Astrocyte of the cerebellum (primary cell): ENCODE measurements at regions of chr2 and their contacts with region 1.

Region 1: DNA sequence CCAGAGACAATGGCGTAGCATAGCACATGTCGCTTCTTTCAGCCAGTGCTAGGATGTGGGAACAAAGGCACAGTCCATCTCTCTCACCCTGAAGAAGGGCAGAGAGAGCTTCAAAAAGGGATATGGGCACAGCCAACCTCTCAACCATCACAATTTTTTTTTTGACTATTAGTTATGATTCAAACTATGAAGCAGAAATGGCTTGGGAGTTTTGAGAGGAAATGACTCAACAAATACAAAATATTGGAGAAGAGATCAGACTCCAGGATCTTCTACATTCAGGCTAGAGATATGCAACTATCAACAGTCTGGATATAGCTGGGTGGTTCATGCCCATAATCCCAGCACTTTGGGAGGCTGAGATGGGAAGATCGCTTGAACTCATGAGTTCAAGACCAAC is 109.1 kb downstream of the MCFD2 start:
- DNase-seq: no peak
- H3K4me3 ChIP-seq: no peak overlapping the region
- CTCF ChIP-seq: no peak

Region 2: DNA sequence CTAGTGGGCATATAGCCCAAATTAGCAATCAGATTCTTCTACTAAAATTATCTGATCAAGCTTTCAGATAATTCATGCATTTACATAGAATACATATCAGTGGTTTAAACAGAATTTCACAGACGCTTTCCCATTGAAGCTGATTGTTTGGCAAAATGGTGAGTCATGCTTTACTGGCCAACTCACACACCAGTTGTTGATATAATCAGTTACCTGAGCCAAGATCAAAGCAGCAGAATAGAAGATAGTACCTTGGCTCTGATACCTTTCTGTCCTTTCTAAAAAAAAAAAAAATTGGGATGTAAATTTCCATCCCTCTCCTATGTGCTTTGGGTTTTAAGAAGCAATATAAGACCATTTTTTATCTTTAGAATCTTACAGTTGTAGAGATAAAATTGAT is 68.9 kb before region 1 on chr2:
- in situ Hi-C with region 1: loop called (anchors 5 kb)
- DNase-seq: no peak
- H3K4me3 ChIP-seq: no peak overlapping the region
- CTCF ChIP-seq: no peak

Region 3: DNA sequence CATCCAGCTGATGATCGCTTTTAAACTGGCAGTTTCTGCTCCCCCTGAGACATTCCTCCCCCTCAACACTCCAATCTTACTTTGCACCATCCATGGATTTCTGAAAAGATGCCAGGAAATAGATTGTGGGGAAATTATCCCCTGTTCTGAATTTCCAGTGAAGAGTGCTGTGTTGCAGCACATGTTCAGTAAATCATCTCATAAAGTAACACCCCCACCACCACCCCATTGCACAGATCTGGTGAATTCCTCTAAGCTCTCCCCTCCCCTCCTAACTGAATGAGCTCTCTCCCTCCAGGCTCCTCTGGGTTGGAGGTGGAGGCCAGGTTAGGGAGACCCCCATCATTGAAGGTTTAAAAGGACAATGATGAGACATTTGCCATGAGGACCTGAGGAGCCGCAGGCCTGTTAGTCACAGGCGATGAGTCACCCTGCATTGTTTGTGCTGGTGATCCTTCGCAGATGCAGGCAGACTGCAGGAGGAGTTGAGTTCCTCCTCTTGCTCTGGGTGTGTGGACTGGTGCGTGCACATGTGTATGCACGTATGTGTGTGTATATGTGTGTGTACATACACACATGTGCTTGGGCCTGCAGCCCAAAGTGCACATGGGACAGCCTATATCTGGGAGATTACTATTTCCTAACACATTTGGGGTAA is 67.0 kb after region 1 on chr2:
- in situ Hi-C with region 1: loop called (anchors 5 kb)
- DNase-seq: peak; percentile 83
- H3K4me3 ChIP-seq: no peak overlapping the region
- CTCF ChIP-seq: no peak